Right lobe of liver (tissue), 6 donors: ENCODE measurements at regions of chr1 and their contacts with region 1.

Region 1: DNA sequence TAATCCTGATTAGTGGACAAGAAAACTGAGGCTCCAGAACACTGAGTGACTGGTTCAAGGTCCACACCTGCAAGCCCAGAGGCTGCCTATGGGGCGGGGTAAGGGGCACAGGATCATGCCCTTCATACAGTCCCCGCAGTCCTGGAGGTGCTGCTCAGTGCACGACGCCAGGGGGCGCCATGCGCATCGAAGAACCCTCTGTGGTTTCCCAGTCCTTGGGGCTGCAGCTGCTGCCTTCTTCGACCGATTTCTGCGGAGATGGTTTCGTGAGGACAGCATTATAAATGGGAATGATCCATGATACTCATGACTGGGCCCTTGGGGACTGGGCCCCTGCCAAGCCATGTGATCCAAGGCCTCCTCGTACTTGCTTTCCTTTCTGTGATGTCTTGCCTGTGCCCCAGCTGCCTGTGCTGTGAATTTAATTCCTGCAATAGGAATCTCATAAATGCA is 37.1 kb upstream of the ARHGEF10L start:
- DNase-seq: peak; percentile 85 to 86 (median 86)
- ATAC-seq: peak; percentile 98
- H3K4me3 ChIP-seq: no peak overlapping the region
- H3K27ac ChIP-seq: no peak overlapping the region
- H3K4me1 ChIP-seq: peaks cover 0 to 3% (median 0%) of the 10 kb centered on the region in 4 donors
- H3K27me3 ChIP-seq: no peaks in the 10 kb centered on the region
- CTCF ChIP-seq: peak; percentile 84 to 96 (median 93)
- POLR2A ChIP-seq: no peak

Region 2: GRCh38 chr1:17250601-17251000 is 251.8 kb before region 1 on chr1:
- intact Hi-C with region 1: no loop called
- DNase-seq: no peak
- ATAC-seq: peak in 1 of 4 donors; percentile 18
- H3K4me3 ChIP-seq: no peak overlapping the region
- H3K27ac ChIP-seq: no peak overlapping the region
- H3K4me1 ChIP-seq: no peaks in the 10 kb centered on the region
- H3K27me3 ChIP-seq: no peaks in the 10 kb centered on the region
- CTCF ChIP-seq: no peak
- POLR2A ChIP-seq: no peak

Region 3: DNA sequence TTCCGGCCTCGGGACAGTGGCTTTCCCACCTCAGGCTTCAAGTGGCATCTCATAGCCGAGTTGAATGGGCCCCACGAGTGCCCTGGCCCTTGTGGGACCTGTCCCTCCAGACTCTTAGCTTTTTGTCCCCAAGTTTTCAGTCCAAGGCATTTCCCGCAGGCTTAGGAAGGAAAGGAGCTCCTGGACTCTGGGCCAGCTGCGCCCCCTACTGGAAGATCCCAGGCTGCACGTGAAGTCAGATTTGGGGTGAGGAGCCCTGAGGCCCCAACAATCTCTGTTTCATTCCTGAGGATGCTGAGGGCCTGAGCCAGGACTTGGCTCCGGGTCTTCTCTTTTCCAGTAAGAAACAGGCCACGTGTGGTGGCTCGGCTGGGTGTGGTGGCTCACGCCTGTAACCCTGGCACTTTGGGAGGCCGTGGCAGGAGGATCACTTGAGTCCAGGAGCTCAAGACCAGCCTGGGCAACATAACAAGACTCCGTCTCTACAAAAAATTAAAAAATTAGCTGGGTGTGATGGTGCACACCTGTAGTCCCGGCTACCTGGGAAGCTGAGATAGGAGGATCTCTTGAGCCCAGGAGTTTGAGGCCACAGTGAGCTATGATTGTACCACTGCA is 104.6 kb after region 1 on chr1:
- intact Hi-C with region 1: loop called (anchors 5 to 10 kb)
- DNase-seq: no peak
- ATAC-seq: peak; percentile 4 to 37 (median 30)
- H3K4me3 ChIP-seq: no peak overlapping the region
- H3K27ac ChIP-seq: peak overlapping the region in 2 of 3 donors; percentile 12 to 56
- H3K4me1 ChIP-seq: peaks cover 0 to 14% (median 5%) of the 10 kb centered on the region in 4 donors
- H3K27me3 ChIP-seq: no peaks in the 10 kb centered on the region
- CTCF ChIP-seq: peak; percentile 80 to 87 (median 84)
- POLR2A ChIP-seq: no peak